Mammary epithelial cell (primary cell): ENCODE measurements at regions of chr2 and their contacts with region 1.

Region 1: GRCh38 chr2:218269899-218270720 is at the starts of genes AAMP and PNKD:
- DNase-seq: peak; percentile 100
- H3K4me3 ChIP-seq: peak within 1 kb of the TSS; percentile 72 to 91 (median 81)
- H3K27ac ChIP-seq: peak within 1 kb of the TSS; percentile 62
- H3K4me1 ChIP-seq: peaks cover 17% of the 10 kb centered on the region
- H3K27me3 ChIP-seq: no peaks in the 10 kb centered on the region
- CTCF ChIP-seq: peak in 1 of 2 donors; percentile 36
- total RNA-seq, gene AAMP: 80.2 to 87.6 TPM
- total RNA-seq, gene PNKD: 15.7 to 29.8 TPM

Region 2: GRCh38 chr2:218286570-218287459 is 16.7 kb after region 1 on chr2:
- CTCF ChIA-PET with region 1: interaction called, 10 read pairs
- dilution Hi-C with region 1: no loop called
- in situ Hi-C with region 1: no loop called
- intact Hi-C with region 1: loop called (anchors 1 kb)
- DNase-seq: peak; percentile 98
- H3K4me3 ChIP-seq: peak overlapping the region; percentile 29 to 48 (median 45)
- H3K27ac ChIP-seq: peak overlapping the region; percentile 99
- H3K4me1 ChIP-seq: peaks cover 78% of the 10 kb centered on the region
- H3K27me3 ChIP-seq: no peaks in the 10 kb centered on the region
- CTCF ChIP-seq: no peak

Region 3: GRCh38 chr2:218343591-218343990 is 73.5 kb after region 1 on chr2:
- CTCF ChIA-PET with region 1: no interaction called
- dilution Hi-C with region 1: no loop called
- in situ Hi-C with region 1: no loop called
- intact Hi-C with region 1: no loop called
- DNase-seq: no peak
- H3K4me3 ChIP-seq: no peak overlapping the region
- H3K27ac ChIP-seq: no peak overlapping the region
- H3K4me1 ChIP-seq: no peaks in the 10 kb centered on the region
- H3K27me3 ChIP-seq: no peaks in the 10 kb centered on the region
- CTCF ChIP-seq: no peak

Region 4: DNA sequence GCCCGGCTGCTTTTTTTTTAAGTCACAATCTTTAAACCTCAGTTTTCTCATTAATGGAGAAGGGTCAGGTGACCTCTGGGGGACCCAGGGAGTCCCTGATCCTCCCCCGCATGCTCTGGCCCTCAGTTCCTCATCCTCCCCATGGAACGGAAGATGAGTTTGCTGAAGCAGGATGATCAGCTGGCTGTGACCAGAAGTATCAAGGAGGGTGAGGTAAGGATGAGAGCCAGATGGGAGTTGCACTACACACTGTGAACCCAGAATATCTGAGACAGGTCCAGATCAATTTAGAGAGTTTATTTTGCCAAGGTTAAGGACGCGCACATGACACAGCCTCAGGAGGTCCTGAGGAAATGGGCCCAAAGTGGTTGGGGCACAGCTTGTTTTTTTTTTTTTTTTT is 90.3 kb after region 1 on chr2:
- CTCF ChIA-PET with region 1: interaction called, 6 read pairs
- dilution Hi-C with region 1: no loop called
- in situ Hi-C with region 1: no loop called
- intact Hi-C with region 1: loop called (anchors 1 kb)
- DNase-seq: no peak
- H3K4me3 ChIP-seq: no peak overlapping the region
- H3K27ac ChIP-seq: no peak overlapping the region
- H3K4me1 ChIP-seq: no peaks in the 10 kb centered on the region
- H3K27me3 ChIP-seq: no peaks in the 10 kb centered on the region
- CTCF ChIP-seq: no peak

Region 5: GRCh38 chr2:218375212-218375611 is 105.1 kb after region 1 on chr2:
- CTCF ChIA-PET with region 1: no interaction called
- dilution Hi-C with region 1: no loop called
- in situ Hi-C with region 1: no loop called
- intact Hi-C with region 1: no loop called
- DNase-seq: no peak
- H3K4me3 ChIP-seq: no peak overlapping the region
- H3K27ac ChIP-seq: no peak overlapping the region
- H3K4me1 ChIP-seq: no peaks in the 10 kb centered on the region
- H3K27me3 ChIP-seq: no peaks in the 10 kb centered on the region
- CTCF ChIP-seq: no peak